Activated naive CD4-positive, alpha-beta T cell treated with anti-CD3 and anti-CD28 coated beads for 36 hours (primary cell): ENCODE measurements at regions of chr14 and their contacts with region 1.

Region 1: GRCh38 chr14:64510825-64511671 is 6.5 kb downstream of the ZBTB1 start:
- DNase-seq: peak; percentile 82
- H3K4me3 Mint-ChIP-seq: peak overlapping the region; percentile 34
- H3K27ac Mint-ChIP-seq: peak overlapping the region; percentile 57
- H3K4me1 Mint-ChIP-seq: peaks cover 75% of the 10 kb centered on the region
- H3K27me3 Mint-ChIP-seq: no peaks in the 10 kb centered on the region

Region 2: DNA sequence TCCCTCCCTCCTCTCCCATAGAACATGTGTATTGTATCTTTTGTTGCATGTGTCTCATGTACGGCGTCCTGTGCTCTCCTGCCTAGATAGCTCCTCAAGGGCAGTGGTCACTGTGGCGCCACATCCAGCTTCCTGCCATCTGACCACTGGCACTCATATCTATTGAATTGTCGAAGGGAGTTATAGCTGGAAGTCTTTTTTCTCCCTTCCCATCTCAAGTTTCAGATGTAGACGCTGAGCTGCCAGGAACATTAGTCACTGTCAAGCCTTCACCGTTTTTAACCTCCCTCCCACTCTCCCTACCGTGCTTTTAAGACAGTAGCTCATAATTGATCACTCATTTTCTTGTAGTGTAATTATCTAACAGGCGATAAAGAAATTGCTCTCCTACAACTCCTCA is 89.9 kb before region 1 on chr14:
- CTCF ChIA-PET with region 1: no interaction called
- intact Hi-C with region 1: no loop called
- DNase-seq: no peak
- H3K4me3 Mint-ChIP-seq: no peak overlapping the region
- H3K27ac Mint-ChIP-seq: no peak overlapping the region
- H3K4me1 Mint-ChIP-seq: no peaks in the 10 kb centered on the region
- H3K27me3 Mint-ChIP-seq: no peaks in the 10 kb centered on the region

Region 3: DNA sequence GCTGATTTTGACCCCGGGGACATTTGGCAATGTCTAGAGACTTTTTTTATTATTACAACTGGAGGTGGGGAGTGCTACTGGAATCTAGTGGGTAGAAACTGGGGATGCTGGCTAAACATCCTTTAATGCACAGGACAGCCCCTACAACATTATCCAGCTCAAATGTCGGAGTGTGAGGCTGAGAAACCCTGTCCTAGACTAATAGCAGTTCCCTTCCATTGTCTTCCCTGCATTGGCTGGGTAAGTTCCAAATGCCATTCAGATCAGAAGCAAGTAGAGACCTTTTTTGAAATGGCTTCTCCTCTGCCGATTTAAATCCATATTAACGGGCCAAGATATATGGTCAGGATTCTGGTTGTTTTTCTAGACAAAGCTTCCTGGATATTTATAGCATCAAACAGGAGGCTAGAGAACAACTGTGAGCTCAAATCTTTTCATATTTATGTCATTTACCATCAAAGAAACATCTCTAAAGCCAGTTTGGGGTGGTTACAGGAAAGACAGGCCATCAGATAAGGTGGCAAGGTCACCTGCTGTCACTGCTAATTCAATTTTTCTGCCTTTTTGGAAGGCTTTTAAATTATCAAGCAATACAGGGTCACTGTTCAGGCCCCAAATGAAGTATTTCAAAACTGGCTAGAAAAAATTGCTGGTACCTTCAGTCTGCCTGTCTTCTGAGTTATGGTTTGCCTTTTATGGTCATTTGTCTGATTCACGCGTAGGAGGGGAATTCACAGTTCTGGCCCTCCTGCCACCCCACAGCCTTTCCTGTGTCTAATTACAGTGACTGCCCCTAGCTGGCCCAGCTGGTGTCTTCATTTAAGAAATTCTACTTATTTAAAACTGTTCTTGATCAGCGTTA is 65.8 kb before region 1 on chr14:
- CTCF ChIA-PET with region 1: interaction called, 6 read pairs
- intact Hi-C with region 1: loop called (anchors 5 kb)
- DNase-seq: peak; percentile 55
- H3K4me3 Mint-ChIP-seq: no peak overlapping the region
- H3K27ac Mint-ChIP-seq: peak overlapping the region; percentile 75
- H3K4me1 Mint-ChIP-seq: peaks cover 32% of the 10 kb centered on the region
- H3K27me3 Mint-ChIP-seq: no peaks in the 10 kb centered on the region

Region 4: GRCh38 chr14:64496764-64497163 is 14.3 kb before region 1 on chr14:
- CTCF ChIA-PET with region 1: interaction called, 32 read pairs
- intact Hi-C with region 1: no loop called
- DNase-seq: no peak
- H3K4me3 Mint-ChIP-seq: no peak overlapping the region
- H3K27ac Mint-ChIP-seq: no peak overlapping the region
- H3K4me1 Mint-ChIP-seq: peaks cover 66% of the 10 kb centered on the region
- H3K27me3 Mint-ChIP-seq: no peaks in the 10 kb centered on the region